Lower leg skin (tissue), 4 donors: ENCODE measurements at regions of chr6 and their contacts with region 1.

Region 1: DNA sequence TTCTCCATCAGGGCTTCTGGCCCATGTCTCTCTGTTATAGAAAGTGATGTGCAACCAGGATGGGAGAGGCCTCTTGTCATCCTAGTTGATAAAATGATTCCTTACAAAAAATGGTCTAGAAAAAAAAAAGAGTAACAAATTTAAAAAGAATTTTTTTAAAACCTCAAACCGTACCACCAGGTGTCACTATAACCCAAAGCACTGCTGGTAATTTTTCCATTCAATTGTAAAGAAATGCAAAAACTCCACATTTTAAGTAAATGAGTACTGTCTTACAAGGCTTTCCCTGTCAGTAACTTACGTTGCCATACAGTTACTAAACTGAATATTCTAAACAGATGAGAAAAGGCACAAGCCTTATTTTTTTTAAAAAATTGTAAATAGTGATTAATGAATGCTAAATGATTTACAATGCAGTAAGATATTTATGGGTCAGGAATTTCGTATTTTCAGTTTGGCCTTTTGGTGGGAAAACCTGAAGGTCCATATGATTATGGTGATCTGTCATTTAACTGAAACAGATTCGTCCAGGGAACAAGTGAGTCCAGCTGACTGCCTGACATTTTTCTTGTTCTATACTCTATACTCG is 95.4 kb downstream of the OGFRL1 start:
- DNase-seq: no peak
- H3K4me3 ChIP-seq: no peak overlapping the region
- CTCF ChIP-seq: peak in 1 of 3 donors; percentile 6
- POLR2A ChIP-seq: no peak

Region 2: GRCh38 chr6:71766146-71766760 is 382.3 kb after region 1 on chr6:
- intact Hi-C with region 1: loop called (anchors 5 kb)
- DNase-seq: no peak
- H3K4me3 ChIP-seq: no peak overlapping the region
- CTCF ChIP-seq: no peak
- POLR2A ChIP-seq: no peak

Region 3: DNA sequence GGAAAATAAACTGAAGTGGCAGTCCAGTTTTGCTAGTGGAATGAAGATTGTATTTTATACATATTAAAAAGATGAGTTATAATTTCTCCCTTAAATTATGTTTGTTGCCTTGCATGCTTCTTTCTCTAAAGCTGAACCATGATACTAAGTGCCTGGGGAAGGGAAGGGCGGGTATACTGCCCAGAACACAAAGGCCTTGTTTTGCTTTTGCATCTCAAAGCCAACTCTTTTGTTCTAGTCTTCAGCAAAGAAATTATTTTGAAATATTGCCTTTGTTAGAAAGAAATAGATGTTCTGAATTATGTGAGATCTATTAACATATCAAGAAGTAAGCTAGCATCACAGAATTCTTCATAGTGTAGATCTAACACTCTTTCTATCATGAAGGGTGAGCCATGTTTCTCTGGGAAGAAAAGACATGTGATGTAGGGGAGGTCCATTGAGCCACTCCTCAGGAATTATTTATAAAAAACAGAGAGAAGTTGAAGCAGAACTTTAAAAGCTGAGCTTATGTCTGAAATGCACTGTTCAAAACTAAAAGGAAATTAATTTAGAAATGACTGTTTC is 610.8 kb after region 1 on chr6:
- intact Hi-C with region 1: loop called (anchors 5 kb)
- DNase-seq: no peak
- H3K4me3 ChIP-seq: no peak overlapping the region
- CTCF ChIP-seq: no peak
- POLR2A ChIP-seq: no peak